BJ (cell line): ENCODE measurements at regions of chr3 and their contacts with region 1.

Region 1: DNA sequence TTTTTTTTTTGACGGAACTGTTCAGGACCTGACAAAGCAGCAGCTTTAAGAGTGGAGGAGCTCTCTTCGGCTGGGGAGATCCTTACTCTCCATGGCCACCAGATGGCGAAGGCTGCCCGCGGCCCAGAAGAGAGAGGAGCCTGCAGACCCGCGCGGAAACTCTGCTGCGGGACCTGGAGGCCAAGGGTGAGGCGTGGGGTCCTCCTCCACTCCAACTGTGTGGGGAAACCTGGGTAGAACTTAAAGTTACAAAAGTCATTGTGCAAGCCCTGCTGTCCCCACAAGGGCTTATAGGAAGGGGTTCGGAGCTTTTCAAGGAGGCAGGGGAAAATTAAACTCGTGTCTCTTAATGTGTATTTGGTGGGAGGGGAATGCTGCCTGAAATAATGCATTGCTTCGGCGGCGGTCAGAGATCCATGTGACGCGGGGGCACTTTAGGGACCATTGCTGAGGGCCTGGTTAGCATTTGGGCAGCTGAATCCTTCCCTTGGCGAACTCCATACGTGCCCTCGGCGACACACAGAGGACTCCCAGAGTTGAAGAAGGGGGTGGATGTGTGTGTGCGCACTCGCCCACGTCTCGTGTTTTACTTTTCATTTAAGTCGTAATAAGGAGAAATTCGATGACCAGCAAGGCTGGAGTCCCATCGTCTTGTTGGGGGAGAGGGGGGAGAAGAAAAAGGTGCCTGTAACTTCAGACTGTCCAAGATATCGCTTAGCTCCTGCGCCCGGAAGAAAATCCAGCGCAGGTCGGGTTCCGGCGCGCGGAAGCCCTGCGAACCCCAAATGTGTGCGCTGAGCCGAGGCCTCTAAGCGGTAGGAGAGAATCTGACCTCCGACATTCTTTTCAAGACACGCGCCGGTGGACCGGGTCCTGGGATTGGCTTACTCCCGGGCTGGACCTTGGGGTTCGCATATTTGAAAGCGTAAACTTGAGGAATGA is 9.7 kb downstream of the EOMES start:
- DNase-seq: peak; percentile 8
- H3K4me3 ChIP-seq: peak overlapping the region; percentile 43
- H3K27me3 ChIP-seq: peaks cover 41% of the 10 kb centered on the region
- CTCF ChIP-seq: peak; percentile 89

Region 2: DNA sequence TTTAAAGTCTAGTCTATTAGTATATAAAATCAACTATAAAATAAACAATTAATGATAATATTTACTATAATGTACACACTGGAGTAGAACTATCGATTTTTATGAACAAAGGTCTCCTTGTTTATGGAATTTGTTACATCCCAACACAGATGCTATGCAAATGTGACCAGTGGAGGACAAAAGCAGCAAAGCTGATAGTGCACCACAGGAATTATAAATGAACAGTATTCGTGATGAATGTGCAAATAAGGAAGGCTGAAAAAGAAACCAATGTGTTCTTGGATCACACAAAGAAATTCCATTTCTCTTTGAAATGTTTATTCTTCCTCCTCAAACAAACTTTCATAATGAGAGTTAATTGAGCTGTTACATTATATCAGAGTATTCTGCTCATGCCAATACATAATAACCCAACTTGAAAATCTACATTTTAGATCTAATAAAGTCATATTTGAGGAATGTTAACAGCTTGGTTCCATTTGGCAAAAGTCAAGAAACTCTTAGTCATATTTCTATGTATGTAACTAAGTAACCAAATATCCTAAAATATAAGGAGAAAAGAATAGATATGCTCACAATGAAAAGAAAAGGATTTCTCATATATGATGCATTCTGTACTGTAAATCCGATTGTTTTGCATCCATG is 422.5 kb before region 1 on chr3:
- CTCF ChIA-PET with region 1: no interaction called
- POLR2A ChIA-PET with region 1: no interaction called
- DNase-seq: no peak
- H3K4me3 ChIP-seq: no peak overlapping the region
- H3K27me3 ChIP-seq: no peaks in the 10 kb centered on the region
- CTCF ChIP-seq: no peak

Region 3: GRCh38 chr3:27699067-27699466 is 13.3 kb before region 1 on chr3:
- CTCF ChIA-PET with region 1: interaction called, 19 read pairs
- POLR2A ChIA-PET with region 1: no interaction called
- DNase-seq: no peak
- H3K4me3 ChIP-seq: no peak overlapping the region
- H3K27me3 ChIP-seq: no peaks in the 10 kb centered on the region
- CTCF ChIP-seq: no peak

Region 4: DNA sequence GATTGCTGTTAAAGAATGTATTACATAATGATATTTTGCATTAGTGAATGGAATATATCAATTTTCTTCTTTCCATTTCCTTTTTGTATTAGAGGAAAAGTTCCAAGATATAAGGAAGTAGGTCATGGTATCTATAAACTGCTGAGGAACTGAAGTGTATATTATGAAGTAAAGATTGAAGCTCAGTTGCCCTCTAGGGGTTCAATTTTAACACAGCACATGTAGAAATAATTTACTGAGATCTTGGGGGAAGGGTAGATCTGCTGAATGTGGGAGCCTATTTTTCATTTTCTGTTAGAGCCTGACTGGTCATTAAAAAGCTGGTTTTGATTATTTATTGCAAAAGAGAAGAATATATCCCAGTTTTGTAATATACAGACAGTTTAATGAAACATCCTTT is 574.2 kb after region 1 on chr3:
- CTCF ChIA-PET with region 1: interaction called, 14 read pairs
- POLR2A ChIA-PET with region 1: no interaction called
- DNase-seq: no peak
- H3K4me3 ChIP-seq: no peak overlapping the region
- H3K27me3 ChIP-seq: no peaks in the 10 kb centered on the region
- CTCF ChIP-seq: peak; percentile 58

Region 5: GRCh38 chr3:28322464-28322863 is 610.1 kb after region 1 on chr3:
- CTCF ChIA-PET with region 1: interaction called, 18 read pairs
- POLR2A ChIA-PET with region 1: interaction called, 16 read pairs
- DNase-seq: no peak
- H3K4me3 ChIP-seq: no peak overlapping the region
- H3K27me3 ChIP-seq: no peaks in the 10 kb centered on the region
- CTCF ChIP-seq: no peak

Region 6: GRCh38 chr3:28328188-28329151 is 616.1 kb after region 1 on chr3:
- CTCF ChIA-PET with region 1: interaction called, 18 read pairs
- POLR2A ChIA-PET with region 1: no interaction called
- DNase-seq: no peak
- H3K4me3 ChIP-seq: no peak overlapping the region
- H3K27me3 ChIP-seq: no peaks in the 10 kb centered on the region
- CTCF ChIP-seq: peak; percentile 48

Region 7: DNA sequence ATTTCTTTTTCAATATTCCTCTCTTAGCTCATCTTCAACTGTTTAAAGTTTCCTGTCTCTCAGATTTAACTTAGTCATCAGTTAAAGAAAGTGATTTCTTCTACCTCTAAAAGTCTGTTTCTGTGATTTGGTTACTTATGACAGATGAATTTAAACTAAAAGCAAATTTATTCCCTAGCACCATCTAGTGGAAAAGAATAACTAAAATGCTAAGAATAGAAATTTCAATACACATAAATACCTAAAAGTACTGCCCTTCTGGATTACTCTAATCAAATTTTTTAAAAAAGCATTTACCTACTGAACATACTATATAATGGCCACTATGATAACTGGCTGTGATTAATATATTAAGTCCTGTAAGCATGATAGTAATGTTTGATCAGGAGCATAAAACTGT is 622.1 kb after region 1 on chr3:
- CTCF ChIA-PET with region 1: interaction called, 18 read pairs
- POLR2A ChIA-PET with region 1: no interaction called
- DNase-seq: no peak
- H3K4me3 ChIP-seq: no peak overlapping the region
- H3K27me3 ChIP-seq: no peaks in the 10 kb centered on the region
- CTCF ChIP-seq: peak; percentile 12; the same call in 1 of the 2 replicates